GM12878 (cell line): ENCODE measurements at regions of chr16 and their contacts with region 1.

Region 1: GRCh38 chr16:72508191-72508590 is 336.2 kb upstream of the PMFBP1 start:
- DNase-seq: no peak
- ATAC-seq: no peak
- H3K4me3 ChIP-seq: no peak overlapping the region
- H3K27ac ChIP-seq: no peak overlapping the region
- H3K4me1 ChIP-seq: no peaks in the 10 kb centered on the region
- H3K27me3 ChIP-seq: no peaks in the 10 kb centered on the region
- CTCF ChIP-seq: no peak
- EP300 ChIP-seq: no peak
- POLR2A ChIP-seq: no peak
- RAD21 ChIP-seq: no peak

Region 2: GRCh38 chr16:72723781-72724180 is 215.6 kb after region 1 on chr16:
- CTCF ChIA-PET with region 1: no interaction called
- POLR2A ChIA-PET with region 1: interaction called, 10 read pairs
- RAD21 ChIA-PET with region 1: no interaction called
- SMC1A ChIA-PET with region 1: no interaction called
- in situ Hi-C with region 1: no loop called
- intact Hi-C with region 1: no loop called
- DNase-seq: no peak
- ATAC-seq: no peak
- H3K4me3 ChIP-seq: no peak overlapping the region
- H3K27ac ChIP-seq: no peak overlapping the region
- H3K4me1 ChIP-seq: no peaks in the 10 kb centered on the region
- H3K27me3 ChIP-seq: no peaks in the 10 kb centered on the region
- CTCF ChIP-seq: no peak
- EP300 ChIP-seq: no peak
- POLR2A ChIP-seq: no peak
- RAD21 ChIP-seq: no peak